ENCODE measurements at regions of chr10 and their contacts with region 1.

Region 1: GRCh38 chr10:47277352-47278151 is 22.4 kb upstream of the GDF10 start:
- DNase-seq: peak in 15 of 35 experiments; percentile 11 to 67 (median 33)
- ATAC-seq: peak; percentile 85 to 99 (median 96)
- H3K4me3 ChIP-seq: no peak overlapping the region
- H3K4me3 Mint-ChIP-seq: peak overlapping the region in 2 of 3 donors; percentile 21 to 64
- H3K27ac ChIP-seq: no peak overlapping the region
- H3K27ac Mint-ChIP-seq: peak overlapping the region; percentile 62 to 65
- H3K4me1 ChIP-seq: peaks cover 9 to 28% of the 10 kb centered on the region in 2 experiments
- H3K4me1 Mint-ChIP-seq: peaks cover 27 to 34% (median 33%) of the 10 kb centered on the region in 3 donors
- H3K27me3 ChIP-seq: peaks cover 0 to 7% of the 10 kb centered on the region in 2 experiments
- H3K27me3 Mint-ChIP-seq: no peaks in the 10 kb centered on the region

Region 2: DNA sequence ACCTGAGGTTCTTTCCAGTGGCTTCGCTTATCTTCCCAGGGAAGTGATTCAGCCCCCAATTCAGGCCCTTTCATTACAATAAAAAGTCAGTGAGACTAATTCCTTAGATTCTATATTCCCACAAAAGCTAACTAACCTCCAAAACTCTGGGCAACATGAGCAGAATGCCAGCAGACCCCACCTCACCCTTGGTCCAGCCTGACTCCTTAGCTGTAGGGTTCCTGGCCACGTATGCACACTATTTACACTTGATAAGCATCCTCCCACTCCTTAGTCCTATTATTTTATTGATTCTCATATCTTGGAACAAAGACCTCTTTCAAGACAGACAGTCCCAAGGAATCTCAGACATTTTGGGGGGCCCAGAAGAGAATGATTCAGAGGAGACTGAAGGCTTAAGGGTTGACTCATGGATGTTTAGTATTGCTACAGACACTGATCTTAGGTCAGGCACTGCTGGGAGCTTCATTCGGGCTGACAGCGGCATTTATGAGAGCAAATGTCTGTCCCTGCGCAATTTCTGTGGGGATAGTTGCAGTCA is 140.2 kb before region 1 on chr10:
- CTCF ChIA-PET with region 1: no interaction called
- POLR2A ChIA-PET with region 1: interaction called in 1 of 2 experiments, 15 read pairs
- DNase-seq: no peak
- ATAC-seq: no peak
- H3K4me3 ChIP-seq: no peak overlapping the region
- H3K4me3 Mint-ChIP-seq: no peak overlapping the region
- H3K27ac ChIP-seq: no peak overlapping the region
- H3K27ac Mint-ChIP-seq: no peak overlapping the region
- H3K4me1 ChIP-seq: no peaks in the 10 kb centered on the region
- H3K4me1 Mint-ChIP-seq: peaks cover 9 to 12% (median 12%) of the 10 kb centered on the region in 3 donors
- H3K27me3 ChIP-seq: no peaks in the 10 kb centered on the region
- H3K27me3 Mint-ChIP-seq: no peaks in the 10 kb centered on the region

Region 3: GRCh38 chr10:47261121-47261520 is 16.4 kb before region 1 on chr10:
- CTCF ChIA-PET with region 1: no interaction called
- POLR2A ChIA-PET with region 1: no interaction called
- DNase-seq: peak in 28 of 35 experiments; percentile 7 to 64 (median 32)
- ATAC-seq: peak; percentile 67 to 76 (median 71)
- H3K4me3 ChIP-seq: no peak overlapping the region
- H3K4me3 Mint-ChIP-seq: peak overlapping the region in 2 of 3 donors; percentile 13 to 64
- H3K27ac ChIP-seq: peak overlapping the region; percentile 88
- H3K27ac Mint-ChIP-seq: peak overlapping the region; percentile 98 to 99
- H3K4me1 ChIP-seq: peaks cover 44 to 67% of the 10 kb centered on the region in 2 experiments
- H3K4me1 Mint-ChIP-seq: peaks cover 89 to 96% (median 94%) of the 10 kb centered on the region in 3 donors
- H3K27me3 ChIP-seq: no peaks in the 10 kb centered on the region
- H3K27me3 Mint-ChIP-seq: no peaks in the 10 kb centered on the region

Measured in T-cell (primary cell).